Activated CD8-positive, alpha-beta T cell treated with anti-CD3 and anti-CD28 coated beads for 36 hours (primary cell): ENCODE measurements at regions of chr11 and their contacts with region 1.

Region 1: DNA sequence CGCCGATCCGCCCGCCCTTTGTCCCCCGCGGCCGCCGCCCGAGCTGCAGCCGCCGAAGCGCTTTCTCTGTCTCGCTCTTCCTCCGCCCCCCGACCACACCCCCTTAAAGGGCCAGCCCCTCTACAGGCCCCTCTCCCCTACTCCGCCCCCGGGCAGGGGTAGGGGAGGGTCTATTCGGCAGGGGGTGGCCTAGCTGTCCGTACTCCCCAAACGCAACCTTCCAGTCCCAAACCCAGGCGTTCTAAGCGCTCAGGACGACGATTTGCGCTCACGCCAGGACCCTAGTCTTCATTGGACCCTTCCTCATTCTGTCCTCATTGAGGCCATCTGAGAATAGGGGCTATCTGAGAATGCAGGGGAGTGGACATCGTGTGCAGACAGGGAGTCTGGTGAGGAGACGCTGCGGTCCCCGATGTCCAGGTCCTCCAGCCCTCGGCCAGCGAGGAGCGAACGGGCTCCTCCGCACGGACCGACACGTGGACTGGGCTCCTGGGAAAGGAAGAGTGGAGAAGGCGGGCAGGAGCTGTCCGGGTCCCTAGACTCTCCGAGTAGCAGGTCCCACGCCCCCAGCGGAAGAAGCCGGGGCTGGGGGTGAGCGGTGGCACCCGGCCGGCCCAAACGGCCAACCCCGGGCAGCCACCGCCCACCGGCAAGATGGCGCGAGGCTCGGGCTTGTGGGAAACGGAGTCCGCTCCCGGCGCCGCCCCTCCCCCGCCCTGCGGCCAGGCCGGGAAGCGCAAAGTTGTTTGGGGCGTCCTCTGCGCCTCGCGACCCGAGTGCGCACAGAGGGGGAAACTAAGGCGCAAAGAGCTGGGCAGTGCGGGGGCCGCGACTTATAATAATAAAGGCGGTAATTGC is at the start of gene PPP1R14B:
- DNase-seq: peak; percentile 89
- ATAC-seq: peak; percentile 55
- H3K4me3 Mint-ChIP-seq: peak within 1 kb of the TSS; percentile 94
- H3K27ac Mint-ChIP-seq: peak within 1 kb of the TSS; percentile 93
- H3K4me1 Mint-ChIP-seq: peaks cover 33% of the 10 kb centered on the region
- H3K27me3 Mint-ChIP-seq: no peaks in the 10 kb centered on the region
- CTCF ChIP-seq: no peak
- total RNA-seq, gene PPP1R14B: 285 to 287 TPM

Region 2: DNA sequence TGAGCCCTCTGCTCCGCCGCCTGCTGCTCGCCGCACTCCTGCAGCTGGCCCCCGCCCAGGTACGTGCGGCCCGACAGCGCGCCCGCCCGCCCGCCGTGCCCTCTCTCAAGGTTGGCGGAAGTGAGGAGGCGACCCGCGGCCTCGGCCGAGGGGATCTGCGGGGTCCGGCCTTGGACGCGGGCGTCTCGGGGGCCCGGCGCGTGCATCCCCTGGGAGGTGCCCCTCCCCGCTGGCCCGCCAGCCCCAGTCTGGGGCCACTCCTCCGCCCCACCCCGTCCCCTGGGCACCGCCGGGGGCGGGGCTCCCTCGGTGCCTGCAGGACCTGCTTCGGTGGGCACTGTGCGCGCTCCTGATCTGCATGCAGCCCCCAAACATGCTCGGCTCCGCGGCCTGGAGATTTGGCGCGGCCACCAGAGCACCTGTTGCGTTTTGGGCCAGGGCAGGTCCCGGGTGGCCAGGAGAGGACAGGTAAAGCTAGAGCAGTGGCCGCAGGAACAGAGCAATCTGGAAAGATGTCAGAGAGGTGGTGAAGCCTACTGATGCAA is 12.2 kb before region 1 on chr11:
- CTCF ChIA-PET with region 1: interaction called, 3 read pairs
- POLR2A ChIA-PET with region 1: interaction called, 16 read pairs
- intact Hi-C with region 1: no loop called
- DNase-seq: peak; percentile 70
- ATAC-seq: peak; percentile 41
- H3K4me3 Mint-ChIP-seq: peak overlapping the region; percentile 88
- H3K27ac Mint-ChIP-seq: peak overlapping the region; percentile 83
- H3K4me1 Mint-ChIP-seq: peaks cover 35% of the 10 kb centered on the region
- H3K27me3 Mint-ChIP-seq: no peaks in the 10 kb centered on the region
- CTCF ChIP-seq: no peak

Region 3: GRCh38 chr11:64259533-64260067 is 12.5 kb after region 1 on chr11:
- CTCF ChIA-PET with region 1: interaction called, 10 read pairs
- POLR2A ChIA-PET with region 1: interaction called, 6 read pairs
- intact Hi-C with region 1: no loop called
- DNase-seq: no peak
- ATAC-seq: peak; percentile 40
- H3K4me3 Mint-ChIP-seq: no peak overlapping the region
- H3K27ac Mint-ChIP-seq: peak overlapping the region; percentile 32
- H3K4me1 Mint-ChIP-seq: peaks cover 12% of the 10 kb centered on the region
- H3K27me3 Mint-ChIP-seq: no peaks in the 10 kb centered on the region
- CTCF ChIP-seq: no peak

Region 4: DNA sequence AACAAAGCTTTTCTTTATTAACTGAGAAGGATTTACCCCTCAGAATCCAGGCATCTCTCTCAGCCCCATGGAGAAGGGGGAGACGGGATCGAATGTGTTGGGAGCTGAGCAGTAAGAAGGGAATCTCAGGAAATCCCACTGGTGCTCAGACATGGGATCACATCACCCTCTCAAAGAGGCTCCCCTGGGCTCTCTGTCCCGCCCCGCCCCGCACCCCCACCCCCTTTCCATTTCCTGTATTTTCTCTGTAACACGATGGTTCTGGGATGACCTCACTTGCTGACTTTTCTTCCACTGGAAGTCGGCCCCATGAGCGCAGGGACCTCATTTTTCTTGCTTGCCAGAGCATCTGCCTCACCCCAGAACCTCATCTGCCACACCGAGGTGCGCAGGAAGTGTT is 211.9 kb after region 1 on chr11:
- CTCF ChIA-PET with region 1: no interaction called
- POLR2A ChIA-PET with region 1: no interaction called
- intact Hi-C with region 1: no loop called
- DNase-seq: no peak
- ATAC-seq: no peak
- H3K4me3 Mint-ChIP-seq: no peak overlapping the region
- H3K27ac Mint-ChIP-seq: no peak overlapping the region
- H3K4me1 Mint-ChIP-seq: no peaks in the 10 kb centered on the region
- H3K27me3 Mint-ChIP-seq: no peaks in the 10 kb centered on the region
- CTCF ChIP-seq: no peak